B cell (primary cell): ENCODE measurements at regions of chr12 and their contacts with region 1.

Region 1: GRCh38 chr12:7995266-7995963 is 37.1 kb upstream of the FOXJ2 start:
- DNase-seq: peak; percentile 93
- ATAC-seq: peak; percentile 100
- H3K4me3 ChIP-seq: no peak overlapping the region
- H3K4me3 Mint-ChIP-seq: no peak overlapping the region
- H3K27ac ChIP-seq: peak overlapping the region; percentile 35 to 82
- H3K27ac Mint-ChIP-seq: no peak overlapping the region
- H3K4me1 ChIP-seq: peaks cover 10 to 14% of the 10 kb centered on the region in 2 donors
- H3K4me1 Mint-ChIP-seq: peaks cover 6% of the 10 kb centered on the region
- H3K27me3 ChIP-seq: no peaks in the 10 kb centered on the region
- H3K27me3 Mint-ChIP-seq: no peaks in the 10 kb centered on the region
- CTCF ChIP-seq: peak; percentile 87

Region 2: GRCh38 chr12:6582196-6582595 is 1413.2 kb before region 1 on chr12:
- CTCF ChIA-PET with region 1: no interaction called
- POLR2A ChIA-PET with region 1: no interaction called
- intact Hi-C with region 1: no loop called
- DNase-seq: no peak
- ATAC-seq: no peak
- H3K4me3 ChIP-seq: no peak overlapping the region
- H3K4me3 Mint-ChIP-seq: no peak overlapping the region
- H3K27ac ChIP-seq: no peak overlapping the region
- H3K27ac Mint-ChIP-seq: no peak overlapping the region
- H3K4me1 ChIP-seq: no peaks in the 10 kb centered on the region
- H3K4me1 Mint-ChIP-seq: no peaks in the 10 kb centered on the region
- H3K27me3 ChIP-seq: no peaks in the 10 kb centered on the region
- H3K27me3 Mint-ChIP-seq: no peaks in the 10 kb centered on the region
- CTCF ChIP-seq: peak; percentile 17

Region 3: GRCh38 chr12:7581625-7582024 is 413.8 kb before region 1 on chr12:
- CTCF ChIA-PET with region 1: no interaction called
- POLR2A ChIA-PET with region 1: no interaction called
- intact Hi-C with region 1: no loop called
- DNase-seq: no peak
- ATAC-seq: no peak
- H3K4me3 ChIP-seq: no peak overlapping the region
- H3K4me3 Mint-ChIP-seq: no peak overlapping the region
- H3K27ac ChIP-seq: no peak overlapping the region
- H3K27ac Mint-ChIP-seq: no peak overlapping the region
- H3K4me1 ChIP-seq: peaks cover 0 to 4% of the 10 kb centered on the region in 2 donors
- H3K4me1 Mint-ChIP-seq: peaks cover 3% of the 10 kb centered on the region
- H3K27me3 ChIP-seq: peaks cover 0 to 5% (median 2%) of the 10 kb centered on the region in 4 experiments
- H3K27me3 Mint-ChIP-seq: peaks cover 24% of the 10 kb centered on the region
- CTCF ChIP-seq: no peak

Region 4: DNA sequence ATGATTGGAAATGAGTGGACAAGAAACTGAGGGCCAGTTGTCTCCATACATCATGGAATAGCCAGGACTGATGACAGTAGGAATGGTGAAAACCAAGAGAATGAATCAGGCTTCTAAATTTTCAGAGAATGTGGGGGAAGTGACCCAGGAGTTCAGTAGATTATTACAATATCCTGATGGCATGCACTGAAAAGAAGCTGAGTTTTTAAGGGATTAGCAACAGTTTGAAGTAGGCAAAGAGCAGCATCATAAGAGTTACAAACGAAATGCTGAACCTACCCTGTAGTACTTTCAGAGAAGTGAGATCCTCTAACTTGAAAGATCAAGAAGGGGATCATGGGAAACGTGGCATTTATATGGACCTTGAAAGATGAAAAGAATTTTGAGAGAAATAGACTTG is 135.9 kb before region 1 on chr12:
- CTCF ChIA-PET with region 1: interaction called, 34 read pairs
- POLR2A ChIA-PET with region 1: no interaction called
- intact Hi-C with region 1: loop called (anchors 1 kb)
- DNase-seq: no peak
- ATAC-seq: no peak
- H3K4me3 ChIP-seq: no peak overlapping the region
- H3K4me3 Mint-ChIP-seq: no peak overlapping the region
- H3K27ac ChIP-seq: no peak overlapping the region
- H3K27ac Mint-ChIP-seq: no peak overlapping the region
- H3K4me1 ChIP-seq: peaks cover 3 to 4% of the 10 kb centered on the region in 2 donors
- H3K4me1 Mint-ChIP-seq: peaks cover 9% of the 10 kb centered on the region
- H3K27me3 ChIP-seq: peaks cover 0 to 8% (median 0%) of the 10 kb centered on the region in 4 experiments
- H3K27me3 Mint-ChIP-seq: no peaks in the 10 kb centered on the region
- CTCF ChIP-seq: no peak

Region 5: DNA sequence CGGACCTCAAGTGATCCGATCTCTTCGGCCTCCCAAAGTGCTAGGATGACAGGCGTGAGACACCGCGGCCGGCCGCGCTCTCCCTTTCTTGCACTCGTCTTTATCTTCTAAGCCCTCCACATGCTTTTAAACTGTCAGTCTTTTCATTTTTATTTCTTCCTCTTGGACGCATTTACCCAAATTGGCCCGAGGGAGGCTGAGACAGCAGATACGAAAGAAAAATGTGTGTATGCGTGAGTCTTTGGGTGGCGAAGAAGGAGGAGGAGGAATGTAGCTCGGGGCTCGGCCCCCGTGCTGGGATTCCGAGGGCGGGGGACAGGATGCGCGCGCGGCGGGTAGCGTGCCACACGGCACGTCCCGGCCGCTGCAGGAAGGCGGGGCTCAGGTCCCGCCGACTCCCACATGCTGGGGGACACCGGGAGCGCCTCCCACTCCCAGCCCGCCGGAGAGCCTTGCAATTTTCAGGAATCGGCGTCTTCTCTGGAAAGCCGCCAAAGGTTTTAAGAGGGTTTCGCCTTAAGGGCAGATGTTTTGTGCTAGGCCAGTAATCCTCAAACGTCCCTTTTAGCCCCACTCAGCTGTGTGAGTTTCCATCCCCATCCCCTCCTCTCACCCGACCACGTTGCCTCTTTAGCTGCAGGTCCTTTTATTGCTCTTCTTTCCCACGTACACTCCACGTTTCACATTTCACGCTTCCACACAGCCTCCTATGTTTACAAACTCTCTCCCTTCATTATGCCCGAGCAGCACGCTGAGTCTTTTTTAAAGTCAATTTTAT is 24.8 kb before region 1 on chr12:
- CTCF ChIA-PET with region 1: interaction called, 13 read pairs
- POLR2A ChIA-PET with region 1: no interaction called
- intact Hi-C with region 1: loop called (anchors 2 kb)
- DNase-seq: peak; percentile 90
- ATAC-seq: peak; percentile 90
- H3K4me3 ChIP-seq: peak overlapping the region; percentile 65 to 94 (median 74)
- H3K4me3 Mint-ChIP-seq: peak overlapping the region; percentile 88
- H3K27ac ChIP-seq: peak overlapping the region; percentile 91 to 96
- H3K27ac Mint-ChIP-seq: peak overlapping the region; percentile 93
- H3K4me1 ChIP-seq: peaks cover 26 to 35% of the 10 kb centered on the region in 2 donors
- H3K4me1 Mint-ChIP-seq: peaks cover 26% of the 10 kb centered on the region
- H3K27me3 ChIP-seq: no peaks in the 10 kb centered on the region
- H3K27me3 Mint-ChIP-seq: no peaks in the 10 kb centered on the region
- CTCF ChIP-seq: peak; percentile 24

Region 6: GRCh38 chr12:7981446-7981845 is 14.0 kb before region 1 on chr12:
- CTCF ChIA-PET with region 1: interaction called, 13 read pairs
- POLR2A ChIA-PET with region 1: interaction called, 3 read pairs
- intact Hi-C with region 1: loop called (anchors 1 kb)
- DNase-seq: no peak
- ATAC-seq: no peak
- H3K4me3 ChIP-seq: no peak overlapping the region
- H3K4me3 Mint-ChIP-seq: no peak overlapping the region
- H3K27ac ChIP-seq: no peak overlapping the region
- H3K27ac Mint-ChIP-seq: no peak overlapping the region
- H3K4me1 ChIP-seq: peaks cover 14 to 19% of the 10 kb centered on the region in 2 donors
- H3K4me1 Mint-ChIP-seq: peaks cover 16% of the 10 kb centered on the region
- H3K27me3 ChIP-seq: no peaks in the 10 kb centered on the region
- H3K27me3 Mint-ChIP-seq: no peaks in the 10 kb centered on the region
- CTCF ChIP-seq: no peak

Region 7: DNA sequence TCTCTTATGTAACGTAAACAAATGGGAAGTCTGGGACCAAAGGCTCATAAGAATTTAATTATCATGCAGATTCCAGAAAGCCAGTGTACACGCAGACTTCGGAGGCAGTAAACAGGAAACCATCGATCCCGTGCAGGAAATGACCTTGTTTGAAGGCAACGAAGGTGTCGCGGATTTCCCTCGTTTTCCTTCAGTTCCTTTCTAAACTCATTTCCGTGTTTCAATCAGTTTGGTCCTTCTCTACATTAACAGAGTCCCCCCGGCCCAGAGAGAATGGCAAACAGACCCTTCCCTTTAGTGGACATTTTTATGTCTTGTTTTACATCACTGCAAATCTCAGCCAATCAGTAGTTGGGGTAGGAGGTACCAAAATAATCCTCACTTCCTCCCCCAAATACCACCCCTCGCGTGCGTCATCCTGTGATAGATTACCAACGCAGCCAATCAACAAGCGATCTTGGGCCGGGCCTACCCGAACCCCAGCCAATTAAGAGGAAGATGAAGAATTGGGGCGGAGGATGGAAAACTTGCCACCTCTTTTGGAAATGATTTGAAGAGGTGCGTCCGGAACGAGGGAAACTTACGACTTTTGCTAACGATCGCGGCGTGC is 31.0 kb after region 1 on chr12:
- CTCF ChIA-PET with region 1: no interaction called
- POLR2A ChIA-PET with region 1: no interaction called
- intact Hi-C with region 1: loop called (anchors 1 kb)
- DNase-seq: peak; percentile 98
- ATAC-seq: peak; percentile 95
- H3K4me3 ChIP-seq: peak overlapping the region; percentile 92 to 99 (median 98)
- H3K4me3 Mint-ChIP-seq: peak overlapping the region; percentile 97
- H3K27ac ChIP-seq: peak overlapping the region; percentile 99 to 100
- H3K27ac Mint-ChIP-seq: peak overlapping the region; percentile 100
- H3K4me1 ChIP-seq: peaks cover 4 to 8% of the 10 kb centered on the region in 2 donors
- H3K4me1 Mint-ChIP-seq: peaks cover 11% of the 10 kb centered on the region
- H3K27me3 ChIP-seq: no peaks in the 10 kb centered on the region
- H3K27me3 Mint-ChIP-seq: no peaks in the 10 kb centered on the region
- CTCF ChIP-seq: no peak